Endothelial cell of umbilical vein (primary cell): ENCODE measurements at regions of chr1 and their contacts with region 1.

Region 1: GRCh38 chr1:180168786-180169639 is 14.3 kb downstream of the QSOX1 start:
- DNase-seq: peak; percentile 51
- H3K4me3 ChIP-seq: no peak overlapping the region
- H3K27ac ChIP-seq: no peak overlapping the region
- H3K4me1 ChIP-seq: no peaks in the 10 kb centered on the region
- H3K27me3 ChIP-seq: no peaks in the 10 kb centered on the region
- CTCF ChIP-seq: peak; percentile 63 to 81
- POLR2A ChIP-seq: no peak

Region 2: DNA sequence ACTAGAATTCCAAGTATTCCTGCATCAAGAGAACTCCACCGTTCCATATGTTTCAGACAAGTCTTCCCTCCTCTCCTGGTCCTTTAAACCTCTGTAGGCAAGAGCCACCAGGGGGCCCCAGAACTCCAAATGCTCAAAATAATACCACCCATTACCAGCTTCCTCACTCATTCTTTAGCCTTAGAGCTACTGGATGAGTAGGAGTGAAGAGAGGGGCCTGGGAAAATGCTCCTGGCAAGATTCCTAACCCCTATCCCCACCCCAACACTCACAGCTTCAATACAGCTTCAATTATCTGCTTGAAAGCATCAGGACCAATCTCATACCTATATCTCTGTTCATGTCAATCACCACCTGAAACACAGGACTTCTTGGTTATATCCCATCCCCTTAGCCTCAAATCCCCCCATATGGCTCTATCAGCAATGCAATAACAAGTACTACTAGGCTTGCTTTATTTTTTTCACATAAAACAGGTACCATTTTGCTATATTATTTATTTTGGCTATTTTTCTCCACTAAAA is 301.1 kb before region 1 on chr1:
- CTCF ChIA-PET with region 1: interaction called, 177 read pairs
- POLR2A ChIA-PET with region 1: no interaction called
- dilution Hi-C with region 1: no loop called
- intact Hi-C with region 1: loop called (anchors 1 kb)
- DNase-seq: peak; percentile 68
- H3K4me3 ChIP-seq: no peak overlapping the region
- H3K27ac ChIP-seq: no peak overlapping the region
- H3K4me1 ChIP-seq: no peaks in the 10 kb centered on the region
- H3K27me3 ChIP-seq: no peaks in the 10 kb centered on the region
- CTCF ChIP-seq: peak; percentile 79 to 80
- POLR2A ChIP-seq: no peak

Region 3: DNA sequence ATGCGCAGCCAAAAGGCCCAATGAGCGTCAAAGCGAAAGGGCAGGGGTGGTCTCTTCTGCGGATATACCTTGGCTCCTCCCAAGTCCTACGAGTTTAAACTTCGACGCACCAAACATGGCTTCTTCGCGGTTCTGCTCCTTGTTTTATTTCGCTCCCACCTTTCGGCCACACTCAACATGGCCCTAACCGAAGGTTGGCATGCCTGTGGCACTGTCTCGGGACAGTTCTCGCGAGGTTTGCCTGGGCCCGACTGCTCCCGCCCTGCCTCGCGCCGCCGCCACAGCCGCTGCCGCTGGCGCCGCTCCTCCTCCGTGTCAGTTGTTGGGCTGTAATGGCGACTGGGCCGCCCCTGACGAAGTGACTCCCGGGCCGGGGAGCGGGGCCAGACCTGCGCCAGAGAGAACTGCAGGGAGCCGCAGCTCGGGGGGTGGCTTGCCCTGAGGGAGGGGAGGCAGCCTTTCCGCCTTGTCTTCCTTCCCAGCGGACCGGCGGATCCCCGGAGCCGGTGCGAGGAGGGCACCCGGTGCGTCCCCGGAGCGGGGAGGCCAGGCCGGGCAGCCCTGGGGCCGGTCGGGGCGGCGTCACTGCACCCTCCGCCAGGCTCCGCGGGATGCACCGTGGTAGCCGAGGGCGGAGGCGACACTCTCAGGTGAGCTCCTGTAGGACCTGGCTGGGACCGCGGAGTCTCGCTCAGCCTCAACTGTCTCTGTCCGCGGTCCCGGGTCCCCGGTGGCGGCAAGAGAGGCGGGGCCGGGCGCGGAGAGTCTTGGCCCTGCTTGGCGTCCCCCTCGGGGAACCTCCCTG is 214.3 kb before region 1 on chr1 and contains the start of gene CEP350:
- CTCF ChIA-PET with region 1: interaction called, 4 read pairs
- POLR2A ChIA-PET with region 1: no interaction called
- dilution Hi-C with region 1: no loop called
- intact Hi-C with region 1: loop called (anchors 1 kb)
- DNase-seq: peak; percentile 99
- H3K4me3 ChIP-seq: peak within 1 kb of the TSS; percentile 88 to 95 (median 95)
- H3K27ac ChIP-seq: peak within 1 kb of the TSS; percentile 55
- H3K4me1 ChIP-seq: peaks cover 22% of the 10 kb centered on the region
- H3K27me3 ChIP-seq: no peaks in the 10 kb centered on the region
- CTCF ChIP-seq: no peak
- POLR2A ChIP-seq: peak; percentile 87
- total RNA-seq, gene CEP350: 30.1 and 30.3 TPM in 2 replicates

Region 4: GRCh38 chr1:180040034-180040433 is 129.0 kb before region 1 on chr1:
- CTCF ChIA-PET with region 1: interaction called, 11 read pairs
- POLR2A ChIA-PET with region 1: no interaction called
- dilution Hi-C with region 1: no loop called
- intact Hi-C with region 1: no loop called
- DNase-seq: peak; percentile 76
- H3K4me3 ChIP-seq: no peak overlapping the region
- H3K27ac ChIP-seq: peak overlapping the region; percentile 32
- H3K4me1 ChIP-seq: peaks cover 23% of the 10 kb centered on the region
- H3K27me3 ChIP-seq: no peaks in the 10 kb centered on the region
- CTCF ChIP-seq: no peak
- POLR2A ChIP-seq: no peak

Region 5: DNA sequence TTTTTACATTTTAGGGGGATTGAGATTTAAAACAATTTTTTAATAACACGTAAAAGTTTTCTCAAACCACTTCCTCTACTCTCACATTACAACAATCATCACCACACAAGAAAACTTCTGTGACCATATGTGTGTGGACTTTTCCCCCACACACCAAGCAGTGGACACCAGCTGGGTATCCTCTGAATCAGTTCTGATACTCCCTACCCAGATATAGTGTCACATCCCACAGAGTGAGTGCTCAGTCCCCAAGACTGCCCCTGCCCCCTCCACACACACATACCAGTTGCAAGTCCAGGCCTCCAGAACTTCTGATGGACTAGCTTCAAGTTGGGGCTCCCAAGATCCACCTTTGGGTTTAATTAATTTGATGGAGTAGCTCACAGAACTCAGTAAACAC is 67.6 kb before region 1 on chr1:
- CTCF ChIA-PET with region 1: interaction called, 12 read pairs
- POLR2A ChIA-PET with region 1: no interaction called
- dilution Hi-C with region 1: no loop called
- intact Hi-C with region 1: no loop called
- DNase-seq: no peak
- H3K4me3 ChIP-seq: no peak overlapping the region
- H3K27ac ChIP-seq: no peak overlapping the region
- H3K4me1 ChIP-seq: no peaks in the 10 kb centered on the region
- H3K27me3 ChIP-seq: no peaks in the 10 kb centered on the region
- CTCF ChIP-seq: no peak
- POLR2A ChIP-seq: no peak

Region 6: DNA sequence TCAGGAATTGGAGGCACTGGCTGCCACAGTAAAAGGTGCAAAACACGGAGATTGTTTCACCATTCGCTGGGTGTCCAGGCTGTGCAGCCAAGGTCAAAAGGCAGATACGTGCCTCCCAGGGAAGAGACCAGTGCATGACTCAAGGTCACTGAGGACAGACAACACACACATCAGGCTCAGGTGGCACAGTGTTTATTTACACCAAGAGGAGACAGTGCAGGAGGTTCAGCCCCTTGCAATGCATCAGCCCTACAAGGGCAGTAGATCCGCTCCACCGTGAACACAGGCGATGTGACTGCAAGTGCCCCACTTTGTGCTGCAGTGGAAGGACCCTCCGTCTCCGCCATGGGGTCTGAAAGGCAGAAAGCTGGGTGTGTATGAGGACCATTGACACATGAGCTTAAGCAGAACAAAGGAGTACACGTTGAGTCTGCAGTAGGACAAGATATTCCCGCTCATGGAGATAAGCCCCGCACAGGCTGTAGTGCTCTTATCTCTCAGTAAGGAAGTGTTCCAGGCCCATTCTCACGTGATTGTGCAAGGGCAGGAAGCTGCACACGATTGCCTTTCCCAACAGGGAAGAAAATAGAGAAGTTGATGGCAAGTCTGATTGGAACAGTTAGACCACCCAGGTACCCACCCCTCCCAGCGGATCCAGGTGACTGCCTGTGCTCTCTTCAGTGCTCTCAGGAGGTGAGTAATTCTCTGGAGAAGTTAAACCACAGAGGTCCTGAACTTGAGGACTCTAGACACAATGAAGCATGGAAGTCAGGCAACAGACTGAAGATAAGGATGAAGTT is 51.8 kb before region 1 on chr1:
- CTCF ChIA-PET with region 1: no interaction called
- POLR2A ChIA-PET with region 1: no interaction called
- dilution Hi-C with region 1: no loop called
- intact Hi-C with region 1: no loop called
- DNase-seq: no peak
- H3K4me3 ChIP-seq: no peak overlapping the region
- H3K27ac ChIP-seq: no peak overlapping the region
- H3K4me1 ChIP-seq: no peaks in the 10 kb centered on the region
- H3K27me3 ChIP-seq: no peaks in the 10 kb centered on the region
- CTCF ChIP-seq: no peak
- POLR2A ChIP-seq: no peak

Region 7: DNA sequence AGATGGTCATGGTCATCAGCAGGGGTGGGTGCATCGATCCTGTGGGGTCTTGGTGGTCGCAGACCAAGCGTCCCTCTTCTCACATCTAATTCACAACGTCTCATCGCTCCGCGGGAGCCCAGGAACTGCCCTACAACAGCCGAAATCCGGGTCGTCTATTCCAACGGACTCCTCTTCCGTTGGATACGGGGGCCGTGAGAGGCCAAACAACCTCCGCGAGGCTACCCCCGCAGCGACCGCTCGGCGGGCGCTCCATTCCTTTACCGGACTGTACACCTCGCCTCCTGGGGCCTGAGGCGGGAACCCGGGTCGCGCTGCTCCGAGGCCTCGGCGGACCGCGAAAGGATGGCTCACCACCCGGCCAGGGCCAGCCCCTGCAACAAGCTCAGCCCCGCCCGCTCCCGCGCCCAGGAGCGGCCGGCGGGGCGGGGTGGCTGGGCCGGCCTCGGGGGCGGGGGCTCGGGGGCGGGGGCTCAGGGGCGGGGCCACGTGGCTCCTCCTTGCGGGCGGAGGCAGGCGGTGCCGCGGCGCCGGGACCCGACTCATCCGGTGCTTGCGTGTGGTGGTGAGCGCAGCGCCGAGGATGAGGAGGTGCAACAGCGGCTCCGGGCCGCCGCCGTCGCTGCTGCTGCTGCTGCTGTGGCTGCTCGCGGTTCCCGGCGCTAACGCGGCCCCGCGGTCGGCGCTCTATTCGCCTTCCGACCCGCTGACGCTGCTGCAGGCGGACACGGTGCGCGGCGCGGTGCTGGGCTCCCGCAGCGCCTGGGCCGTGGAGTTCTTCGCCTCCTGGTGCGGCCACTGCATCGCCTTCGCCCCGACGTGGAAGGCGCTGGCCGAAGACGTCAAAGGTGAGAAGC is 14.5 kb before region 1 on chr1 and contains the start of gene QSOX1:
- CTCF ChIA-PET with region 1: interaction called, 18 read pairs
- POLR2A ChIA-PET with region 1: interaction called, 7 read pairs
- dilution Hi-C with region 1: no loop called
- intact Hi-C with region 1: no loop called
- DNase-seq: peak; percentile 82
- H3K4me3 ChIP-seq: peak within 1 kb of the TSS; percentile 54 to 90 (median 87)
- H3K27ac ChIP-seq: peak within 1 kb of the TSS; percentile 58
- H3K4me1 ChIP-seq: peaks cover 60% of the 10 kb centered on the region
- H3K27me3 ChIP-seq: no peaks in the 10 kb centered on the region
- CTCF ChIP-seq: no peak
- POLR2A ChIP-seq: peak; percentile 95
- total RNA-seq, gene QSOX1: 256 and 257 TPM in 2 replicates

Region 8: GRCh38 chr1:180594723-180595122 is 425.7 kb after region 1 on chr1:
- CTCF ChIA-PET with region 1: no interaction called
- POLR2A ChIA-PET with region 1: no interaction called
- dilution Hi-C with region 1: no loop called
- intact Hi-C with region 1: no loop called
- DNase-seq: no peak
- H3K4me3 ChIP-seq: no peak overlapping the region
- H3K27ac ChIP-seq: no peak overlapping the region
- H3K4me1 ChIP-seq: no peaks in the 10 kb centered on the region
- H3K27me3 ChIP-seq: peaks cover 6 to 12% of the 10 kb centered on the region in 2 experiments
- CTCF ChIP-seq: no peak
- POLR2A ChIP-seq: no peak